AG04450 (cell line): ENCODE measurements at regions of chr5 and their contacts with region 1.

Region 1: DNA sequence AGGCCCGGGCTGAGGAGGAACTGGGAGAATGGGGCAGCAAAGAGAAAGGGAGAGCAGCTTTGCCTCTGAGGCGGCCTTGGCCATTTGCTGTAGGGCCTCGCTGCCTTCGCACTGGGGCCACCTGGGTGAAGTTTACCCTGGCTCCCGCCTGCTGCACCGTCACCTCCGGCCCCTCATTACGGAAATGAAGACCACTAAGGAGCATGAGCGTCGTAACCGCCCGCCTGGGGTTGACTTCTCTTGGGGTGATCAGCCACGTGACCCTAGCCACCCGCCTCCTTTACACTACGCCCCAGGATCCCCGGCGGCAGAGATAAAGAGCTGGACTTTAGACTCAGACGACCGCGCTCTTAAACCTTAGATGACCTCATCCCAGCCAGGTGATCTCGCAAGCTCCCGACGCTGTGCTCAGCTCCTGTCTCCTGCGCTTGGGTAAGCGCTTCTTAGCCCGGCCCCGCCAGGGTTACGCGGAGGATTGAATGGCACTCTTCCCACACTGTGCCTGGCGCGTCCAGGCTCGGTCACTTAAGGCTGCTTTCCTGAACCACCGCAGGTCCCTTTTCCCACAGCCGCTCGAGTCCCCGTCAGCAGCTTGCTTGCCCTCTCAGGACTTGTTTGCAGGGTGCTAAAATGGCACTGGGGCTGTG is 107.9 kb upstream of the LARP1 start:
- DNase-seq: no peak
- H3K4me3 ChIP-seq: peak overlapping the region; percentile 39
- H3K27ac ChIP-seq: no peak overlapping the region
- H3K27me3 ChIP-seq: peaks cover 9% of the 10 kb centered on the region
- CTCF ChIP-seq: no peak

Region 2: DNA sequence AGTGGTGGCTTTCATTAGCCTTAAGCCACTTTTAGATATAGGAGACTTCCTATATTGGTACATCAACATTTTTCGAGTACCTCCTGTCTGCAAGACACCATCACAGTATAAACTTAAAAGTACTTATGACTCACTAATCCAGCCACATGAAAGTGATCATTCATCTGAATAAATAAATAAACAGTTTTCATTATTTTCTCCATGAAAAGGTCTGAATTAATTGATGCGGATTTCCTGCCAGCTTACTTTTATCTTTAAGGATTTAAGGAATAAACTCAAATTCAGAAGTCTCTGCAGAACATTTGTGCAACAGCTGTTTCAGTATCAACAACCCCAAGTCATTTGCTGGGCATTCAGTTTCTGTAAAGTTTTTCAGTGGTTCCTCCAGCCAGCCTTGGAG is 197.5 kb before region 1 on chr5:
- CTCF ChIA-PET with region 1: interaction called, 11 read pairs
- POLR2A ChIA-PET with region 1: interaction called, 3 read pairs
- DNase-seq: no peak
- H3K4me3 ChIP-seq: no peak overlapping the region
- H3K27ac ChIP-seq: no peak overlapping the region
- H3K27me3 ChIP-seq: no peaks in the 10 kb centered on the region
- CTCF ChIP-seq: no peak

Region 3: DNA sequence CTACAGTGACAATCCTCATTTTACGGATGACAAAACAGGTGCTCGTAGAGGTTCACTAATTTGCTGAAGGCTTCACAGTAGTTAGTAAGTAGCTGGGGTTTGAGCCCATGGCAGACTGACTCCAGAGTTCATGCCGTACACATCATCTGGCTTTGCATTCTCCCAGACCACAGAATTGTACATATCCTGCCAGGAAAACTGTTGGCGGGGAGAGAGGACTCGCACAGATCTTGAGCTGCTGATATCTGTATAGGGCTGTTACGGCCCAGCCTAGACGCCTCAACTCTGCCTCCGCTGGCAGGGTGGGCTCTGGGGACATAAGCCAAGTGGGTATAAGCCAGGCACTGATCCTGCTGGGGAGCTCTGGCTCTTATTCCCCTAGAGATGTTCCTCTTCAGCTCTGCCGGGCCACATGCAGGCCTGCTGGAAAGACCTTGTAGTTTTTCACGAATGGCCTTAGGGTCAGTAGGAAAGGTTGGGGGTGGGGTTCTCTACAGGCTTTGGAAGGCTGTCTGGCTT is 124.2 kb after region 1 on chr5:
- CTCF ChIA-PET with region 1: interaction called, 11 read pairs
- POLR2A ChIA-PET with region 1: no interaction called
- DNase-seq: peak; percentile 73
- H3K4me3 ChIP-seq: peak overlapping the region; percentile 41
- H3K27ac ChIP-seq: peak overlapping the region; percentile 80
- H3K27me3 ChIP-seq: no peaks in the 10 kb centered on the region
- CTCF ChIP-seq: peak; percentile 23; the same call in 1 of the 2 replicates

Region 4: GRCh38 chr5:154811653-154812365 is 164.6 kb after region 1 on chr5:
- CTCF ChIA-PET with region 1: interaction called, 10 read pairs
- POLR2A ChIA-PET with region 1: no interaction called
- DNase-seq: peak; percentile 54
- H3K4me3 ChIP-seq: no peak overlapping the region
- H3K27ac ChIP-seq: no peak overlapping the region
- H3K27me3 ChIP-seq: no peaks in the 10 kb centered on the region
- CTCF ChIP-seq: peak; percentile 97